Left cardiac atrium (tissue), 4 donors: ENCODE measurements at regions of chr3 and their contacts with region 1.

Region 1: GRCh38 chr3:115436767-115437301 is 186.5 kb upstream of the GAP43 start:
- DNase-seq: no peak
- ATAC-seq: peak in 1 of 2 donors; percentile 84

Region 2: GRCh38 chr3:115226844-115227445 is 209.9 kb before region 1 on chr3:
- intact Hi-C with region 1: loop called in 1 of 2 experiments (anchors 10 kb)
- DNase-seq: no peak
- ATAC-seq: no peak